ENCODE measurements at regions of chr13 and their contacts with region 1.

Region 1: GRCh38 chr13:80342471-80343380 is 1.8 kb upstream of the SPRY2 start:
- DNase-seq: peak; percentile 64
- H3K4me3 Mint-ChIP-seq: peak overlapping the region; percentile 57
- H3K27ac Mint-ChIP-seq: no peak overlapping the region
- H3K4me1 Mint-ChIP-seq: peaks cover 8% of the 10 kb centered on the region
- H3K27me3 Mint-ChIP-seq: peaks cover 48% of the 10 kb centered on the region

Region 2: DNA sequence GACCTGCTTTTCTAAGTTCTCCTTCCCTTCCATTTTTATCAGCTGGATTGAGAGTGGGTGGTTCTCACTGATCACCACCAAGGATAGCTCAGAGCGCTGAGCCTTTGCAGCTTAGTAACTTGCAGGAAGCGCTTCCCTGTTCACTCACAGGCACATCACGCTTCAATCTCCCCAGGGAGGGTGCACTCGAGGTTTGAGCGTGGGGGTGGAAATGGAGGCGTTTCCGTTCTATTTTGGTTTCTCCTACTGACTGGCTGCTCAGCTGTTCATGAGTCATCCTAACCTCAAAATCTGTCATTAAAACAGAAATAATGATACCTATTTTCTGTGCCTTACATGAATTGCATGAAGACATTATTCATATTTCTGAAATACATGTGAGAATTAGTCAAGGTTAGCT is 293.9 kb before region 1 on chr13:
- CTCF ChIA-PET with region 1: no interaction called
- intact Hi-C with region 1: loop called (anchors 5 kb)
- DNase-seq: peak; percentile 81
- H3K4me3 Mint-ChIP-seq: no peak overlapping the region
- H3K27ac Mint-ChIP-seq: no peak overlapping the region
- H3K4me1 Mint-ChIP-seq: peaks cover 10% of the 10 kb centered on the region
- H3K27me3 Mint-ChIP-seq: peaks cover 5% of the 10 kb centered on the region

Region 3: GRCh38 chr13:80386002-80386401 is 43.3 kb after region 1 on chr13:
- CTCF ChIA-PET with region 1: no interaction called
- intact Hi-C with region 1: no loop called
- DNase-seq: no peak
- H3K4me3 Mint-ChIP-seq: no peak overlapping the region
- H3K27ac Mint-ChIP-seq: no peak overlapping the region
- H3K4me1 Mint-ChIP-seq: no peaks in the 10 kb centered on the region
- H3K27me3 Mint-ChIP-seq: peaks cover 3% of the 10 kb centered on the region

Region 4: GRCh38 chr13:80399340-80400163 is 56.8 kb after region 1 on chr13:
- CTCF ChIA-PET with region 1: interaction called, 3 read pairs
- intact Hi-C with region 1: loop called (anchors 5 kb)
- DNase-seq: peak; percentile 13
- H3K4me3 Mint-ChIP-seq: no peak overlapping the region
- H3K27ac Mint-ChIP-seq: no peak overlapping the region
- H3K4me1 Mint-ChIP-seq: peaks cover 24% of the 10 kb centered on the region
- H3K27me3 Mint-ChIP-seq: peaks cover 8% of the 10 kb centered on the region

Measured in activated naive CD4-positive, alpha-beta T cell treated with anti-CD3 and anti-CD28 coated beads for 36 hours (primary cell).